ENCODE measurements at regions of chr12 and their contacts with region 1.

Region 1: DNA sequence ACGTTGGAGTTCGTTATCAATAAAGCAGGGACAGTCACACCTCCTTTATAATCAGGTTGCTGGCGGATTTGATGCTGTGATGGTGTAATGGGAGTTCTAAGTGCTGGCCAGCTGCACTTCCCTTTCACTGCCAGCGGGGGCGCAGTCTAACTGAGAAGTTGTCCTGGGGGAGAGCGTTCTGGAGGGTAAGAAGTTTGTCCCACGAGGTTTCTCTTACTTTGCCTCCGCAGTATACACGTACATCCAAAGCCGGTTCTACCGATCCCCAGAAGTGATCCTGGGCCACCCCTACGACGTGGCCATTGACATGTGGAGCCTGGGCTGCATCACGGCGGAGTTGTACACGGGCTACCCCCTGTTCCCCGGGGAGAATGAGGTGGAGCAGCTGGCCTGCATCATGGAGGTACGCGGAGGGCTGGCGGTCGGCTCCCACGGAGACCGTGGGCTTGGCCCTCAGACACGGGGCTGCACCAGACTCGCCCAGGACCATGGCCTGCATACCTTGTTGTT is 42.7 kb downstream of the DYRK4 start:
- DNase-seq: peak; percentile 90
- H3K4me3 ChIP-seq: peak overlapping the region; percentile 71 to 86 (median 76)
- H3K27ac ChIP-seq: peak overlapping the region; percentile 73 to 79 (median 78)
- H3K4me1 ChIP-seq: peaks cover 0 to 19% (median 16%) of the 10 kb centered on the region in 4 donors
- H3K27me3 ChIP-seq: no peaks in the 10 kb centered on the region
- CTCF ChIP-seq: peak; percentile 88 to 98 (median 96)
- EP300 ChIP-seq: no peak
- POLR2A ChIP-seq: no peak

Region 2: GRCh38 chr12:4648501-4649357 is 44.0 kb after region 1 on chr12 and contains the starts of genes AKAP3 and NDUFA9:
- intact Hi-C with region 1: loop called (anchors 5 kb)
- DNase-seq: peak; percentile 89
- H3K4me3 ChIP-seq: peak within 1 kb of the TSS; percentile 57 to 68 (median 65)
- H3K27ac ChIP-seq: peak within 1 kb of the TSS; percentile 81 to 85 (median 84)
- H3K4me1 ChIP-seq: peaks cover 0 to 37% (median 23%) of the 10 kb centered on the region in 4 donors
- H3K27me3 ChIP-seq: no peaks in the 10 kb centered on the region
- CTCF ChIP-seq: no peak
- EP300 ChIP-seq: no peak
- POLR2A ChIP-seq: peak in 1 of 2 donors; percentile 48
- total RNA-seq, gene AKAP3: 0.36 to 1.6 (median 0.91) TPM
- total RNA-seq, gene NDUFA9: 21.3 to 41.1 (median 38.7) TPM

Region 3: GRCh38 chr12:4763549-4763948 is 158.8 kb after region 1 on chr12:
- intact Hi-C with region 1: loop called (anchors 5 kb)
- DNase-seq: peak; percentile 75
- H3K4me3 ChIP-seq: no peak overlapping the region
- H3K27ac ChIP-seq: no peak overlapping the region
- H3K4me1 ChIP-seq: no peaks in the 10 kb centered on the region
- H3K27me3 ChIP-seq: no peaks in the 10 kb centered on the region
- CTCF ChIP-seq: no peak
- EP300 ChIP-seq: no peak
- POLR2A ChIP-seq: no peak

Measured in sigmoid colon (tissue), 7 donors.